ENCODE measurements at regions of chr12 and their contacts with region 1.

Region 1: GRCh38 chr12:132638541-132639418 is 20.2 kb downstream of the P2RX2 start:
- DNase-seq: peak in 1 of 3 donors; percentile 43
- H3K4me3 ChIP-seq: no peak overlapping the region
- H3K27ac ChIP-seq: no peak overlapping the region
- H3K4me1 ChIP-seq: peaks cover 0 to 14% (median 2%) of the 10 kb centered on the region in 4 experiments
- H3K27me3 ChIP-seq: no peaks in the 10 kb centered on the region

Region 2: DNA sequence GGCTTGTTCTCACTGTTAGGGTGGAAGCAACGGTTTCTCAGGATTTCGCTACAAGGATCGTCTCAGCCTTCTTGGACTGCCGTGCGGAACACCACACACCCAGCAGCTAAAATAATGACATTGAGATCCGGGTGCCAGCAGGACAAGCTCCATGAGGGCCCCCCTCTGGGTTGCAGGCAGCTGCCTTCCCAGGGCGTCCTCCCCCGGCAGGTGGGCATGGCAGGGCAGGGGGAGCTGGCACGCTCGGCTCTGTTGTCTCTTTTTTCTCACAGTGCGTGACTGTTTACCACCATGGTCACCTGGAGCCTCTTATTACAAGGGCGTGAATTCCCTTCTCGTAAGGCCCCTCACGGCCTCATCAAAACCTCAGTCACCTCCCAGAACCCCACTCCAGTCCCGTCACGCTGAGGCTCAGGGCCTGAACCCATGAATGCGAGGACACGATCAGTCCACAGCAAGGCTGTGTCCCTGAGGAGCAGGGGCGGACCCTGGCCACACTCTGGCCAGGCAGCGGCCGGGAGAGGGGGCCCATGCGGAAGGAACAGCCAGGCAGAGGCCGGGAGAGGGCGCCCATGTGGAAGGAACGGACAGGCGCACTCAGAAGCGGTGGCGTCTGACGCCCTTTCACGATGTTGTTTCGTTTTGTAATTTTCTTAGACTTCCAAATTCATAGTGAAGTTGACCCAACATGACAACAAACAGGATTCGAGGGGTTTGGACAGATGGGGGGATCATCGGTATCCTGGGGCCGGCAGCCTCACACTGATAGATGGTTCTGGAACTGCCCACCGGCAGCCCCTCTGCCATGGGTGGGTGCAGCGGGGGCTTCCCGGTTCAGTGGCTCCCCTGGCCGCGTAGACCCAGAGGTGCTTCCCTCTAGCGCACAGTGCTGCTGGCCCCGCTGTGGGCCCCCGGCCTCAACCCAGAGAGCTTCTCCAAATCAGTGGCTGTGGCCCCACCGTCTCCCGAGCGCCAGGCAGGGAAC is 38.4 kb before region 1 on chr12:
- CTCF ChIA-PET with region 1: interaction called, 28 read pairs
- POLR2A ChIA-PET with region 1: no interaction called
- DNase-seq: peak; percentile 69 to 72 (median 70)
- H3K4me3 ChIP-seq: peak overlapping the region in 6 of 7 experiments; percentile 51 to 85 (median 75)
- H3K27ac ChIP-seq: no peak overlapping the region
- H3K4me1 ChIP-seq: peaks cover 0 to 40% (median 19%) of the 10 kb centered on the region in 4 experiments
- H3K27me3 ChIP-seq: peaks cover 0 to 44% (median 20%) of the 10 kb centered on the region in 5 experiments

Region 3: DNA sequence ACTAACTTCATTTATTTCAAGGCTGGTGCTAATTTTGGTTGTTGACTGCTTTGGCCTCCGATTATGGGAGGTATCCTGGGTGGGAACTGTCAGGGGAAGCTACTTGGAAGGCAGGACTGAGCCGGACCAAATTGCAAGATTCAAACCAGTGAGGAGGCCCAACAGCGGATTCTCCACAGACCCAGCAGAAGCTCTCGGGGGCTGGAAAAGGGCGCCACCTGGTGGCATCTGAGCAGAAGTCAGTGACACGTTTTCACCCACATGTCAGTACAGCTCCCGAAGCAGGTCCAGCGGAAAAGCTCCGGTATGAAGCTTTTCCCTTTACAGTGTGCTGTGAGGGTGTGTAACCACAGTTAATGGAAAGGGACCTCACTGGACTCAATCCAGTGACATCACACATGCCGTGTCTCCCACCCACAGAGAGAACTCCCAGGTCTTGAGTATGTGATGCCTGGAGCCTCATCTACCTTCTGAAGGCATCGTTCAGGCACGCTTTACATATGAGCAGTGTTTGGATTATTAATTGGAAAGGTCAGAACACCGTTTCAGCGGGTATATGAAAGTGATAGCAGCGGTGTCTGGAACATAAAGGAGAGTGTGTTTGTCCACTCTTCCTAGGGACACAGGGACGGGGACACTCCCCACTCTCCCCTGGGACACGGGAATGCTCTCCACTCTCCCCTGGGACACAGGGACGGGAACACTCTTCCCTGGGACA is 23.8 kb before region 1 on chr12:
- CTCF ChIA-PET with region 1: interaction called, 17 read pairs
- POLR2A ChIA-PET with region 1: no interaction called
- DNase-seq: peak; percentile 82 to 91 (median 87)
- H3K4me3 ChIP-seq: no peak overlapping the region
- H3K27ac ChIP-seq: no peak overlapping the region
- H3K4me1 ChIP-seq: peaks cover 0 to 10% (median 6%) of the 10 kb centered on the region in 4 experiments
- H3K27me3 ChIP-seq: peaks cover 13 to 64% (median 14%) of the 10 kb centered on the region in 5 experiments

Region 4: DNA sequence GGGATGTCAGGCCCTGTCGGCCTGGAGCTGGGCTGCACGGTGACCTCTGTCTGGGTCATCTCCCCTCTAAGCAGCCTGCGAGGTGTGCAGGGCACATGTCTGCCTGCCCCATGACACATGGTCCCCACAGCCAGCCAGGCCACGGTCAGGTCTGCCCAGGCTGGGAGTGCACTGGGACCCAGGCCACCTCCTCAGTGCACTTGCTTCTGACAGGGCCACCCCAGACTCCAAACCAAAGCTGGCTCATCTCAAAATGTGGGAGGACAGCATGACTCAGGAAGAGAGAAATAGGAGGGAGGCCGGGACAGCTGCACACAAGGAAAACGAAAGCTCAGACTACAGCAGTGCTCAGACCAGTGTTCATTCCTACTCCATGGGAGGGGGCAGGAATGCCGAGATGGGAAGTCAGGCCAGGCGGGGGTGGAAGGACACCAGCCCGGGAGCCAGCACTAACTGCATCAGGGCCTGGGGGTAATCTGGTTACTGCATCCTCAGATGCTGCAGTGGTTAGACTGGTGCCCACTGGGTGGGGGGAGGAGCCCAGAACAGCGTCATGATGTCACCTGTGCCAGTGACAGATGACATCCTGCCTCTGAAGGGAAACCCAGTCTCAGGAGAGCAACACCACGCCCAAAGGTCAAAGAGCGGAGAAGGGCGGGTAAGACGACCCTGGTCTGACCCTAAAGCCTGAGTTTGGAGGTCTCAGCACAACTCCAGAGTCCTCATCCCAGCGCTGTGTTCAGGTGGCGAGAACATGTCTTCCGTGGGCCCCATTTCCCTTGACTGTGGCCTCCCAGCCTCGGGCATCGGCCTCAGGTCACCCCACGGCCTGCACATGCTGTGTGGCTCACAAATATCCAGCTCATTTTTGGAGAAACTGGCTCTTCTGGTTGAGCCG is 16.1 kb before region 1 on chr12:
- CTCF ChIA-PET with region 1: interaction called, 12 read pairs
- POLR2A ChIA-PET with region 1: no interaction called
- DNase-seq: no peak
- H3K4me3 ChIP-seq: no peak overlapping the region
- H3K27ac ChIP-seq: no peak overlapping the region
- H3K4me1 ChIP-seq: peaks cover 0 to 4% (median 1%) of the 10 kb centered on the region in 4 experiments
- H3K27me3 ChIP-seq: peaks cover 2 to 36% (median 4%) of the 10 kb centered on the region in 5 experiments

Region 5: GRCh38 chr12:132657004-132657683 is 18.4 kb after region 1 on chr12:
- CTCF ChIA-PET with region 1: interaction called, 29 read pairs
- POLR2A ChIA-PET with region 1: interaction called, 3 read pairs
- DNase-seq: peak in 1 of 3 donors; percentile 37
- H3K4me3 ChIP-seq: peak overlapping the region in 1 of 7 experiments; percentile 30
- H3K27ac ChIP-seq: peak overlapping the region; percentile 85
- H3K4me1 ChIP-seq: peaks cover 12 to 55% (median 52%) of the 10 kb centered on the region in 4 experiments
- H3K27me3 ChIP-seq: no peaks in the 10 kb centered on the region

Measured in common myeloid progenitor, CD34-positive (primary cell).